Uterus (tissue), 4 donors: ENCODE measurements at regions of chr17 and their contacts with region 1.

Region 1: GRCh38 chr17:79839363-79840268 is at the start of gene CBX4:
- DNase-seq: peak; percentile 91 to 93
- H3K4me3 ChIP-seq: peak within 1 kb of the TSS; percentile 54 to 58
- H3K27ac ChIP-seq: peak within 1 kb of the TSS; percentile 81 to 91
- H3K4me1 ChIP-seq: peaks cover 0 to 41% of the 10 kb centered on the region in 2 donors
- H3K27me3 ChIP-seq: peaks cover 25 to 45% of the 10 kb centered on the region in 2 donors
- CTCF ChIP-seq: peak in 3 of 4 experiments; percentile 17 to 57 (median 52)
- POLR2A ChIP-seq: peak; percentile 85 to 97
- total RNA-seq, gene CBX4: 0.26 to 8.4 (median 3.5) TPM

Region 2: DNA sequence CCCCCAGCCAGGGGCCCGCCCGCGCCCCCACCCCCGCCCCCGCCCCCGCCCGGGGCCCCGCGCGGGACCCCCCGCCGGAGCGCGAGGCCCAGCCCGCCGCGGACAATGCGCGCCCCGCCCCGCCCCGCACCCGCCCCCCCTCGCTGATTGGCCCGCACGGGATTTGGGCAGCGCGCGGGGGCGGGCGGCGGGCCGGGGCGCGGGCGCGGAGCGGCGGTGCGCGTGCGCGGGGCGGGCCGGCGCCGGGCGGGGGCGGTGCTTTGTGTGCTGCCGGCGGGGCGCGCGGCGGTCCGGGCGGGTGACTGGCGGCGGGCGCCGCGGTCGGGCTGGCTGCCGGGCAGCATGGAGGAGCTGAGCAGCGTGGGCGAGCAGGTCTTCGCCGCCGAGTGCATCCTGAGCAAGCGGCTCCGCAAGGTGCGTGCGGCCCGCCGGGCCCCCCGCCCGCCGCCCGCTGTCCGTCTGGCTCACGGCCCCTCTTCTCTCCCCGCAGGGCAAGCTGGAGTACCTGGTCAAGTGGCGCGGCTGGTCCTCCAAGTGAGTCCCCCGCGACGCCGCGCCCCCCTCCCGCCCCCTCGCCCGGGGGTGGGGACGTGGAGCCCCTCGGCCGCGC is 61.6 kb before region 1 on chr17 and contains the start of gene CBX2:
- intact Hi-C with region 1: no loop called
- DNase-seq: peak; percentile 61 to 81
- H3K4me3 ChIP-seq: peak within 1 kb of the TSS; percentile 36 to 57
- H3K27ac ChIP-seq: peak within 1 kb of the TSS; percentile 20 to 26
- H3K4me1 ChIP-seq: peaks cover 0 to 10% of the 10 kb centered on the region in 2 donors
- H3K27me3 ChIP-seq: peaks cover 0 to 20% of the 10 kb centered on the region in 2 donors
- CTCF ChIP-seq: no peak
- POLR2A ChIP-seq: peak in 1 of 2 donors; percentile 21
- total RNA-seq, gene CBX2: 1.0 to 14.9 (median 4.6) TPM in 3 of 4 donors, not detected in the other

Region 3: DNA sequence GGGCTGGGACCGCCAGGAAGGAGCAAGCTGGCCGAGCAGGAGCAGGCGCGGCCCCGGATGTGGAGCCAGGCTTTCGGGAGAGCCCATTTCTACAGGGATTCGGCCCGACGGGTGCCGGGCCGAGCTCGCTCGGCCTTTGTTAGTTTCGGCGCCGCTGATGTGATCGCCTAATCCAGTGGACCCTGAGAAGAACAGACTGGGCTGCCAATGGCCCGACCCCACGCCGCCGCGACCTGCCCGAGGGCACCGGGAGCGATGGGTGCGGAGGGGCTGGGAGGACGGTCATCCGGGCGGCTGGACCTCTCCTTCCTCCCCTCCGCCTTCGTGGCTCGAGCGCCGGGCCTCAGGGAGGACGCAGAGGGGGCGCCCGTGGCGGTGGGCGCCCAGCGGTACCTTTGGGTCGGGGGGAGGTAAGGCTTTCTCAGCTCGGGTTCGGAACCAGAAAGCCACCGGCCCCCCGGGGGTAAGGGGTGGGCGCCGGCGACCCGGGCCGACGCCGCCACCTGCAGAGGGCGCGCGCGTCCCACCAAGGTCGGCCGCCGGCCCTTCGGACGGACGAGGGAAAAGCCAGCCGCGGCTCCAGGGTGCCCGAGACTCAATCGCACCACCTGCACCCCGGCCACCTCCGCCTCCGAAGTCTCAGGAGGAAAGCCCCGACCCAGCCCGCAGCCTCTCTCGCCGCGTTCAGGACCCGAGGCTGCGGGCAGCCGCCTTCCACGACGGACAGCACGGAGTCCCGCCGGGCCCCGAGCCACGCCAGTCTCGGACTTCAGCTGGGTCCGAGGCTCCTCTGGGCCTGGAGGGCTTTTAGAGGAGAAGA is 49.9 kb before region 1 on chr17:
- intact Hi-C with region 1: loop called (anchors 5 kb)
- DNase-seq: no peak
- H3K4me3 ChIP-seq: no peak overlapping the region
- H3K27ac ChIP-seq: no peak overlapping the region
- H3K4me1 ChIP-seq: peaks cover 7 to 10% of the 10 kb centered on the region in 2 donors
- H3K27me3 ChIP-seq: peaks cover 39 to 42% of the 10 kb centered on the region in 2 donors
- CTCF ChIP-seq: peak; percentile 47 to 78 (median 76)
- POLR2A ChIP-seq: no peak

Region 4: GRCh38 chr17:79923974-79924638 is 84.5 kb after region 1 on chr17:
- intact Hi-C with region 1: no loop called
- DNase-seq: no peak
- H3K4me3 ChIP-seq: no peak overlapping the region
- H3K27ac ChIP-seq: no peak overlapping the region
- H3K4me1 ChIP-seq: peaks cover 0 to 9% of the 10 kb centered on the region in 2 donors
- H3K27me3 ChIP-seq: peaks cover 7 to 23% of the 10 kb centered on the region in 2 donors
- CTCF ChIP-seq: no peak
- POLR2A ChIP-seq: no peak

Region 5: DNA sequence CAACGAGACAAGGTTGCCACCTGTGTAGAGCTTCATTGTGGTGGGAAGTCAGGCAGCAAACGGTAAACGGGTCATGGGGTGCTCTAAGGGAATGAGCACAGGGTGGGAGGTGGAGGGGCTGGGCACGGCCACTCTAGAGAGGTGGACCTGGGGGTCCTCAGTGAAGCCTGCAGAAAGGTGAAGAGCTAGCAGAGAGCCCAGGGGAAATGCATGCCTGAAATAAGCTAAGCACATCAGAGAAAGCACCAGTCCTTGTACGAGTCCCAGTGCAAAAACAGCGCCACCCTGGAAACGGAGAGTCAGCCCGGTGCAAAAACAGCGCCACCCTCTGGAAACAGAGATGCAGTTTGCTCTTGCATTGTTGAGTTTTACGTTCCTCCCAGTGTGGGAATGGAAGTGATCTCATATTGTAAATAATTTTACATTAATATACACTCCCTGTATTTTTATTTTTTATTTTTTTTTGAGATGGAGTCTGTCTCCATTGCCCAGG is 131.0 kb after region 1 on chr17:
- intact Hi-C with region 1: loop called (anchors 10 kb)
- DNase-seq: peak in 1 of 2 donors; percentile 7
- H3K4me3 ChIP-seq: no peak overlapping the region
- H3K27ac ChIP-seq: no peak overlapping the region
- H3K4me1 ChIP-seq: no peaks in the 10 kb centered on the region
- H3K27me3 ChIP-seq: no peaks in the 10 kb centered on the region
- CTCF ChIP-seq: no peak
- POLR2A ChIP-seq: no peak

Region 6: GRCh38 chr17:80053102-80053501 is 213.5 kb after region 1 on chr17:
- intact Hi-C with region 1: no loop called
- DNase-seq: no peak
- H3K4me3 ChIP-seq: no peak overlapping the region
- H3K27ac ChIP-seq: peak overlapping the region; percentile 37 to 50
- H3K4me1 ChIP-seq: no peaks in the 10 kb centered on the region
- H3K27me3 ChIP-seq: no peaks in the 10 kb centered on the region
- CTCF ChIP-seq: no peak
- POLR2A ChIP-seq: no peak

Region 7: DNA sequence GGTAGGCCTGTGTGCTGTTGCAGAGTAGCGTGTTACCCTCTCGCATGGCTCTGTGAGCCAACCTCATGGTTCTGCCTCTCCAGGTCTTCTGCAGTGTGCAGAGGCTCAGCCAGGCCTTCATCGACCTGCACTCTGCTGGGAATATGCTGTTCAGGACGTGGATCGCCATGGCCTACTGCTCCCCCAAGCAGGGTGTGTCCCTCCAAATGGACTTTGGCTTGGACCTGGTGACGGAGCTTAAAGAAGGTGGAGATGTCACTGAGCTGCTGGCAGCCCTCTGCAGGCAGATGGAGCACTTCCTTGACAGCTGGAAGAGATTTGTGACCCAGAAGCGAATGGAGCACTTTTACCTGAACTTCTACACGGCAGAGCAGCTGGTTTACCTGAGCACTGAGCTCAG is 499.5 kb after region 1 on chr17:
- intact Hi-C with region 1: no loop called
- DNase-seq: no peak
- H3K4me3 ChIP-seq: no peak overlapping the region
- H3K27ac ChIP-seq: no peak overlapping the region
- H3K4me1 ChIP-seq: no peaks in the 10 kb centered on the region
- H3K27me3 ChIP-seq: no peaks in the 10 kb centered on the region
- CTCF ChIP-seq: no peak
- POLR2A ChIP-seq: no peak